Sigmoid colon (tissue), 7 donors: ENCODE measurements at regions of chr2 and their contacts with region 1.

Region 1: DNA sequence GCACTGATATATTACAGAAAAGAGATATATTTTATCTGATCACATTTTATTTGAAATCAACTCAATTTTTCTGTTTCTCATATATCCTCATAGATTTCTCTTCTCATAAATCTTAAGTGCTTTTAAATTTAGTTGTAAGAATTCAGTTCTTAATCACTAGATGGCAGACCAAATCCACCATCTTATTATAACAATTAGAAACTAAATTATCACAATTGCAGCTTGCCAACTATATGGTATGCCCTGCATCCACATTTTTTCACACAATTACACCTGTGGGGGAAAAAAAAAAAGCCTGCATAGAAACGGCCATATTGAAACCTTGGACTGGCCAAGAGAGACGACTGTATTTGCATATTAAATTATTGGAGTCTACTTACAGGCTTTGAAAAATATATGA is 64.4 kb downstream of the COL5A2 start:
- DNase-seq: no peak
- H3K4me3 ChIP-seq: no peak overlapping the region
- H3K27ac ChIP-seq: peak overlapping the region in 2 of 4 donors; percentile 36 to 38
- H3K4me1 ChIP-seq: peaks cover 0 to 51% (median 40%) of the 10 kb centered on the region in 4 donors
- H3K27me3 ChIP-seq: no peaks in the 10 kb centered on the region
- CTCF ChIP-seq: no peak
- EP300 ChIP-seq: no peak
- POLR2A ChIP-seq: no peak

Region 2: DNA sequence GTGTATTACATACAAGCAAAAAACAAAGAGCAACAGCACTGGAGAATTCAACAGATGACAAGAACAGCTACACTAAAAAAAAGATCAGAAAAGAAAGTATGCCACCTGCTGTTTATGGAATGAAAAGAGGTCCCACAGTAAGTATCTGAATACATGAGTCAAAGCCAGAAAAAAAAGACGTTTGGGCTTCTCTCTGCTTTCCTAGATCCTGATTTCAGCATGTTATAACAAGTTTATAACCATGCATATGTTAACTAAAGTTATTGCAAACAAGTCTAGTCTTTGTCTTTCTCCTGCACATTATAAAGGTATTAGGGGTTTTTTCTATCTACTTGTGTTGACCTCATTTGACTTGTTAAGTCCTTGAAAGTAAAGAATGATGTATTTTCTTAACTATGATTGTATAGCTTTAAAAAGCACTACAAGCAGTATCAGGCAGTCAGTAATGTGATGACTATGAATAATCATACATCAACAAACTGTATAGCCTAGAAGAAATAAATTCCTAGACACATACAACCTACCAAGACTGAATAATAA is 172.9 kb after region 1 on chr2:
- intact Hi-C with region 1: loop called (anchors 5 kb)
- DNase-seq: no peak
- H3K4me3 ChIP-seq: no peak overlapping the region
- H3K27ac ChIP-seq: peak overlapping the region in 2 of 4 donors; percentile 37 to 67
- H3K4me1 ChIP-seq: peaks cover 0 to 34% (median 25%) of the 10 kb centered on the region in 4 donors
- H3K27me3 ChIP-seq: no peaks in the 10 kb centered on the region
- CTCF ChIP-seq: peak; percentile 38 to 52 (median 50)
- EP300 ChIP-seq: no peak
- POLR2A ChIP-seq: no peak